CD14-positive monocyte (primary cell): ENCODE measurements at regions of chr2 and their contacts with region 1.

Region 1: DNA sequence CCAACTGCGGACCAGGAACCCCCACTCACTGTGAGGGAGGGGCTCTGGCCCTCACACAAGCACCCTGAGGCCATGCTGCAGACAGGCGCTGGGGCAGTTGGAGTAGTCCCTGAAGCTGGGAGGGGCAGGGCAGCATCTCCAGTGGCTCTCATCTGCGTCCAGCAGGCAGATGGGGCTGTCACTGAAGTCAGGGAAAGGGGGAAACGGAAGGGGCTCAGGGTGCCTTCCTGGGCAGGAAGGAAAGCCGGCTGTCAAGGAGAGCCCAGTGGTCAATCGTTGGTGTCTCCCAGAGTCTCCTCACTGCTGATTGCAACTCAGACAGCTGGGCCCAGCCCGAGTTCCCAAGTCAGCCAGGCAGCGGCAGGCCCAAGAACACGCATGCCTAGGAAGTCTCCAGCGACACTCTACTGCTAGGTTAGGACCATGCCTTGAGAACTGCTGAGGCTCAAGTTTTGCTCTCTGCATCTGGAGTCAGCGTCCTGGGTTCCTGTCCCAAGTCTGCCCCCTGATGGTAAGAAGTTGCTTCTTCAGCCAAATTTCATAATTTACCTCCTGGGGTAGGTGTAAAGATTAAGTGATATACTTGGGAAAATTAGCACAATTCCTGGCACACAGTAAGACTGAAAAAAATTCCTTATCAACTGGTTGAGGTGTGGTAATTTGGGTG is 27.5 kb upstream of the NMUR1 start:
- DNase-seq: peak; percentile 76 to 82 (median 80)
- H3K4me3 ChIP-seq: no peak overlapping the region
- H3K4me3 Mint-ChIP-seq: peak overlapping the region in 1 of 2 donors; percentile 65
- H3K27ac ChIP-seq: no peak overlapping the region
- H3K27ac Mint-ChIP-seq: peak overlapping the region in 1 of 7 donors; percentile 3
- H3K4me1 ChIP-seq: peaks cover 24 to 30% of the 10 kb centered on the region in 2 donors
- H3K4me1 Mint-ChIP-seq: peaks cover 32% of the 10 kb centered on the region
- H3K27me3 ChIP-seq: peaks cover 5 to 27% of the 10 kb centered on the region in 2 donors
- H3K27me3 Mint-ChIP-seq: peaks cover 33 to 49% (median 41%) of the 10 kb centered on the region in 3 donors
- CTCF ChIP-seq: peak; percentile 73

Region 2: DNA sequence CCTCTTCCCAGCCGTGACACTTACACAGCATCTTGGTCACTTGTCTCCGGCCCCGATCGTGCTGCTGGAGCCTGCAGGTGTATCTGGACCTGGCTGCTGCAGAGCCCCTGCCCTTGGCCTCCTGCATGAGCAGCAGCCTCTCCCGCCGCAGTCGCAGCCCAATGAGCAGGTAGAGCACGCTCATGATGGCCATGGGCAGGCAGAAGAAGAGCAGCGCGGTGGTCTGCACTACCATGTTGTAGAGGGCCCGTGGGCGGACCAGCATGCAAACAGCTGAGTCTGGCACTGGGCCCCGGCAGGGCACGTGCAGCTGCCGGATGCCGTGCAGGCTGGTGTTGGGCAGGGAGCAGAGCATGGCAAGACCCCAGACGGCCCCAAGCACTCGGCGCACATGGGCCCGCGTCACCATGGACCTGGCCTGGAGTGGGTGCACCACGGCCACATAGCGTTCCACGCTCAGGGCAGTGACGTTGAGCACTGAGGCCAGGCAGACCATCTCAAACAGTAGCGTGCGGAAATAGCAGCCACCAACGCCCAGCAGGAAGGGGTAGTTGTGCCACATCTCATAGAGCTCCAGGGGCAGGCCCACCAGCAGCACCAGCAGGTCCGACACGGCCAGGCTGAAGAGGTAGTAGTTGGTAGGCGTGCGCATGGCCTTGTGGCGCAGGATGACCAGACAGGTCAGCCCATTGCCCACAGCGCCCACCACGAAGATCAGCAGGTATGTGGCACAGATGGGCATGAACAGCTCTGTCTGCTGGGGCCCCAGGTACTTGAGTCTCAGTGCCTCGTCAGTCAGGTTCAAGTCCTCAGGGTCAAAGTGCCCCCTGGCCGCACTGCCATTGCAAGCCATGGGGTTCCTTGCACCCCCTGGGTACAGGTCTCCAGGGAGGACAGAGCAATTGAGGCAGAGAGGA is 29.3 kb before region 1 on chr2:
- intact Hi-C with region 1: loop called (anchors 2 kb)
- DNase-seq: no peak
- H3K4me3 ChIP-seq: no peak overlapping the region
- H3K4me3 Mint-ChIP-seq: peak overlapping the region; percentile 16 to 71
- H3K27ac ChIP-seq: no peak overlapping the region
- H3K27ac Mint-ChIP-seq: peak overlapping the region in 2 of 7 donors; percentile 14 to 47
- H3K4me1 ChIP-seq: peaks cover 17 to 23% of the 10 kb centered on the region in 2 donors
- H3K4me1 Mint-ChIP-seq: peaks cover 33% of the 10 kb centered on the region
- H3K27me3 ChIP-seq: peaks cover 8 to 63% of the 10 kb centered on the region in 2 donors
- H3K27me3 Mint-ChIP-seq: peaks cover 57 to 95% (median 66%) of the 10 kb centered on the region in 3 donors
- CTCF ChIP-seq: no peak